Caco-2 (cell line): ENCODE measurements at regions of chr11 and their contacts with region 1.

Region 1: DNA sequence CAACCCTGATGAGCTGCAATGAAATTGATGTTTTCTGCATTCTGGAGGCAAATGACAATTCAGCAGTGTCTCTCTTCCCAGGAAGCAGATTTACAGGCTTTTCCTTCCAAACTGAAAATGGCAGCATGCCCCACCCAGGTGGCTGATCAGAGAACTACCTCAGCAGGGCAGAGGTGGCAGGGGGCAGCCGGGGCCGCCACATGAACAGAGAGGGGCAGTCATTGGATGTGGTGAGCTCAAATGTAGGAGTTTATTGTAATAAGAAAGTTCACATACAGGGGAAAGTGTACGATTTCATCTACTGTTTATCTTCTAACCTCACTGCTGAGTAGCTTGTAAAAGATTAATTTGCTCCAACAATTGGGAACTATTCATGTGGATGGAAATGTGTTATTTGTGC is 15.7 kb upstream of the PARVA start:
- DNase-seq: no peak
- H3K4me3 ChIP-seq: no peak overlapping the region
- H3K4me3 Mint-ChIP-seq: no peak overlapping the region
- H3K27ac Mint-ChIP-seq: no peak overlapping the region
- H3K4me1 ChIP-seq: peaks cover 18% of the 10 kb centered on the region
- H3K4me1 Mint-ChIP-seq: peaks cover 13% of the 10 kb centered on the region
- H3K27me3 ChIP-seq: no peaks in the 10 kb centered on the region
- H3K27me3 Mint-ChIP-seq: no peaks in the 10 kb centered on the region
- CTCF ChIP-seq: no peak

Region 2: DNA sequence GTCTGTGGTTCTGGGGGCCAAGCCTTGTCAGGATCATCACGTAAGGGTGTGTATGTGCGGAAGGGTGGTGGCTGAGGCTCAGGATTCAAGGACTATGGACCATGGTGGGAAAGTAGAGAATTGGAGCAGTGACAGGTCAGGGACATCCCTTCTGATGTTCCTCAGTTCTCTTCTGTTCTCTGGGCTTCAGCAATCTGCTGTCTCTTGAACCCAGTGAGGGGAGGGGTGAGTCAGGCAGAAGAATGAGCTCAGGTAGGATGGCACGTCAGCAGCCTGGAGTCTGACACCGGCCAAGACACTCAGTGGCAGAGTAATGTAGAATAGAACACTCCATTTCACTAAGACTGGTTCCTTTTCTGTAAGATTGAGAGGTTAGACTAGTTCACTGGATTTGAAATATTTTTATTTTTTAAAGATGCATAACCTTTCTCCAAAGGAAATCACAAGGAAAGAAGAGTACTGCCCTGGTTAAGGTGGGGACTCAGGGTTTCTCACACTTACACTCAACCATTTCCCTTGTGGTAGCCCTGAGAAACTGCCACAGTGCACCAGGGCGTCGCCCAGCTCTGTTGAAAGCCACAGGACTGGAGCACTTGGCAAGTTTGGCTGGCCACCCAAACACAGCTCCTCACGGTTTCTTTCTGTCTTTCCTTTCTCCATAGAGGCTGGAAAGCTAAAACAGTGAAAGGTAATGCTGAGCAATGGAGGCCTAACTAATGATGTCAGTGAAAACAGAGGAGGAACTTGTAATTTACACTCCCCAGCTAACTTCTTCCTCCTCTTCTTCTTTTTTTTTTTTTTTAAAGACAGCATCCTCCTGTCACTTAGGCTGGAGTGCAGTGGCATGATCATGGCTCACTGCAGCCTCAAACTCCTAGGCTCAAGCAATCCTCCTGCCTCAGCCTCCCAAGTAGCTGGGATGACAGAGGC is 274.3 kb before region 1 on chr11:
- CTCF ChIA-PET with region 1: no interaction called
- POLR2A ChIA-PET with region 1: no interaction called
- intact Hi-C with region 1: no loop called
- DNase-seq: peak; percentile 34 to 42
- H3K4me3 ChIP-seq: no peak overlapping the region
- H3K4me3 Mint-ChIP-seq: no peak overlapping the region
- H3K27ac Mint-ChIP-seq: peak overlapping the region; percentile 78
- H3K4me1 ChIP-seq: peaks cover 73% of the 10 kb centered on the region
- H3K4me1 Mint-ChIP-seq: peaks cover 60% of the 10 kb centered on the region
- H3K27me3 ChIP-seq: no peaks in the 10 kb centered on the region
- H3K27me3 Mint-ChIP-seq: no peaks in the 10 kb centered on the region
- CTCF ChIP-seq: peak; percentile 7 to 11

Region 3: GRCh38 chr11:12100841-12101242 is 260.8 kb before region 1 on chr11:
- CTCF ChIA-PET with region 1: no interaction called
- POLR2A ChIA-PET with region 1: no interaction called
- intact Hi-C with region 1: no loop called
- DNase-seq: no peak
- H3K4me3 ChIP-seq: no peak overlapping the region
- H3K4me3 Mint-ChIP-seq: no peak overlapping the region
- H3K27ac Mint-ChIP-seq: no peak overlapping the region
- H3K4me1 ChIP-seq: peaks cover 17% of the 10 kb centered on the region
- H3K4me1 Mint-ChIP-seq: peaks cover 43% of the 10 kb centered on the region
- H3K27me3 ChIP-seq: no peaks in the 10 kb centered on the region
- H3K27me3 Mint-ChIP-seq: no peaks in the 10 kb centered on the region
- CTCF ChIP-seq: no peak

Region 4: GRCh38 chr11:12377824-12378593 is 16.3 kb after region 1 on chr11:
- CTCF ChIA-PET with region 1: interaction called, 8 read pairs
- POLR2A ChIA-PET with region 1: interaction called, 9 read pairs
- intact Hi-C with region 1: loop called (anchors 1 kb)
- DNase-seq: peak; percentile 78 to 87
- H3K4me3 ChIP-seq: peak overlapping the region; percentile 90
- H3K4me3 Mint-ChIP-seq: peak overlapping the region; percentile 85
- H3K27ac Mint-ChIP-seq: peak overlapping the region; percentile 88
- H3K4me1 ChIP-seq: peaks cover 10% of the 10 kb centered on the region
- H3K4me1 Mint-ChIP-seq: peaks cover 8% of the 10 kb centered on the region
- H3K27me3 ChIP-seq: no peaks in the 10 kb centered on the region
- H3K27me3 Mint-ChIP-seq: no peaks in the 10 kb centered on the region
- CTCF ChIP-seq: no peak